CD8-positive, alpha-beta memory T cell (primary cell): ENCODE measurements at regions of chr11 and their contacts with region 1.

Region 1: DNA sequence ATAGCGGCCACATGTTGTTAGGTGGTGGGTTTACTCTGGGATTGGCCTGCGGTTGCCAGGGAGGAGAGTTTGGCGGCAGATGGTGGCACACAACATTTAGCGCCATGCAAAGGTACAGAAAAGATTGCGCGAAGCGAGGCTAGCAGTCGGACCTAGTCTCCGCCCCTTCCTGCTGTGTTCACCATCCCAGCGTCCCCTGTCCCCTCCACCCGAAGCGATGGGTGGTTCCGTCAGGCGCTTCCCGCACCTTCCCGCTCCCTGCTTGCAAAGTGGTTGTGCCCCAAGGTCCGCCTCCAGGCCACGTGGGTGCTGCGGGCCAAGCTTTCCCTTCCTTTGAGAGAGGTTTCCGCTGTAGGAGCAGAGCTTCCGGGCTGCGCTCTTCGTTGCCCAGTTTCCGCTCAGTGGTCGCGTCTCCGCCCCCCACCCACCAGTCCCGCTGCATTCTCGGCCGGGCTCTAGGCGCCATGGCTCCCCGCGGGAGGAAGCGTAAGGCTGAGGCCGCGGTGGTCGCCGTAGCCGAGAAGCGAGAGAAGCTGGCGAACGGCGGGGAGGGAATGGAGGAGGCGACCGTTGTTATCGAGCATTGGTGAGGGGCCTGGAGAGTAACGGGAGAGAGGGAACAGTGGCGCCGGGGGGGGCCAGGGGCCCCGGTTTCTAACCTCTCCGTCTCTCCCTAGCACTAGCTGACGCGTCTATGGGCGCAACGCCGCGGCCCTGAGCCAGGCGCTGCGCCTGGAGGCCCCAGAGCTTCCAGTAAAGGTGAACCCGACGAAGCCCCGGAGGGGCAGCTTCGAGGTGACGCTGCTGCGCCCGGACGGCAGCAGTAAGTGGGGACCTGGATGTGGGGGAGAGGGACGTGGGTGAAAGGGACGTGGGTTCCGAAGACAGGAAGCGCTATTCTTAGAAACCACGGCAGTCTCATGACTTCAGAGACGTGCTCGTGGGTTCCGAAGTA is at the start of gene SELENOH:
- DNase-seq: peak; percentile 85 to 91 (median 89)
- H3K4me3 ChIP-seq: peak within 1 kb of the TSS; percentile 93
- H3K4me3 Mint-ChIP-seq: peak within 1 kb of the TSS; percentile 92 to 100 (median 98)
- H3K27ac ChIP-seq: peak within 1 kb of the TSS; percentile 90
- H3K27ac Mint-ChIP-seq: peak within 1 kb of the TSS; percentile 94 to 100 (median 98)
- H3K4me1 ChIP-seq: peaks cover 26% of the 10 kb centered on the region
- H3K4me1 Mint-ChIP-seq: peaks cover 27 to 49% (median 40%) of the 10 kb centered on the region in 3 donors
- H3K27me3 ChIP-seq: no peaks in the 10 kb centered on the region
- H3K27me3 Mint-ChIP-seq: peaks cover 0 to 2% of the 10 kb centered on the region in 2 donors
- total RNA-seq, gene SELENOH: 272 to 276 TPM

Region 2: DNA sequence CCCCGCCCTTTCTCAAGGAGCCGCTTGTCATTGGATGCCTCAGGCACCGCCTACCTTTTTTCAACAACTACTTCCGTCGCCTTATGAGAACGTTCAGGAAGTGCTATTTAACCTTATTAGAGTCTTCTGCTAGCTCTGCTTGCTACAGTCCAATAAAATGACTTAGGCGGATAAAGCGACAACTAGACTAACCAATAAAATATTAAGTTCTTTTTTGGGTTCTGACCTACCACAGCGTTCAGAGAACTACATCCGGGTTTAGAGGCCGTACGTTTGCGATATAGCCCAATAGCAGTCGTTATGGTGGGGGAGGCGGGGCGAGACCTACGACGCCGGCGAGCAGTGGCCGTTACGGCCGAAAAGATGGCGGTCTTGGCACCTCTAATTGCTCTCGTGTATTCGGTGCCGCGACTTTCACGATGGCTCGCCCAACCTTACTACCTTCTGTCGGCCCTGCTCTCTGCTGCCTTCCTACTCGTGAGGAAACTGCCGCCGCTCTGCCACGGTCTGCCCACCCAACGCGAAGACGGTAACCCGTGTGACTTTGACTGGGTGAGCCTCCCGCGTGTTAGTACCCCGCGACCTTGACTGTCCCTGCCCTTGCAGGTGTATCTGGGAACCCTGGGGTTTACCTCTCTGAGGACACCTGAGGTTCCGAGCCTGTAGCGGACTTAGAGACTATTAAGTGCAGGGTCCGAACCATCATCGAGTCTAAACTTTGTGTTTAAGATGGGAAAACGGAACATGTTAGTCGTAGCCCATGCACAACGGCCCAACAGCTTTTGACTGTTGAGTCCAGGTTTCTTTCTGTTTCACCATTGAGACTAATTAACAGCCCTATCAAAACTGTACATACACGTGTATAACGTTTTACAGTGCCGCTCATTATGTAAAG is 28.9 kb before region 1 on chr11 and contains the start of gene TMX2:
- CTCF ChIA-PET with region 1: interaction called, 4 read pairs
- POLR2A ChIA-PET with region 1: interaction called, 10 read pairs
- DNase-seq: peak; percentile 87 to 93 (median 90)
- H3K4me3 ChIP-seq: peak within 1 kb of the TSS; percentile 99
- H3K4me3 Mint-ChIP-seq: peak within 1 kb of the TSS; percentile 93 to 99 (median 98)
- H3K27ac ChIP-seq: peak within 1 kb of the TSS; percentile 90
- H3K27ac Mint-ChIP-seq: peak within 1 kb of the TSS; percentile 81 to 98 (median 98)
- H3K4me1 ChIP-seq: peaks cover 43% of the 10 kb centered on the region
- H3K4me1 Mint-ChIP-seq: peaks cover 42 to 57% (median 53%) of the 10 kb centered on the region in 3 donors
- H3K27me3 ChIP-seq: no peaks in the 10 kb centered on the region
- H3K27me3 Mint-ChIP-seq: no peaks in the 10 kb centered on the region
- total RNA-seq, gene TMX2: 129 to 131 TPM

Region 3: DNA sequence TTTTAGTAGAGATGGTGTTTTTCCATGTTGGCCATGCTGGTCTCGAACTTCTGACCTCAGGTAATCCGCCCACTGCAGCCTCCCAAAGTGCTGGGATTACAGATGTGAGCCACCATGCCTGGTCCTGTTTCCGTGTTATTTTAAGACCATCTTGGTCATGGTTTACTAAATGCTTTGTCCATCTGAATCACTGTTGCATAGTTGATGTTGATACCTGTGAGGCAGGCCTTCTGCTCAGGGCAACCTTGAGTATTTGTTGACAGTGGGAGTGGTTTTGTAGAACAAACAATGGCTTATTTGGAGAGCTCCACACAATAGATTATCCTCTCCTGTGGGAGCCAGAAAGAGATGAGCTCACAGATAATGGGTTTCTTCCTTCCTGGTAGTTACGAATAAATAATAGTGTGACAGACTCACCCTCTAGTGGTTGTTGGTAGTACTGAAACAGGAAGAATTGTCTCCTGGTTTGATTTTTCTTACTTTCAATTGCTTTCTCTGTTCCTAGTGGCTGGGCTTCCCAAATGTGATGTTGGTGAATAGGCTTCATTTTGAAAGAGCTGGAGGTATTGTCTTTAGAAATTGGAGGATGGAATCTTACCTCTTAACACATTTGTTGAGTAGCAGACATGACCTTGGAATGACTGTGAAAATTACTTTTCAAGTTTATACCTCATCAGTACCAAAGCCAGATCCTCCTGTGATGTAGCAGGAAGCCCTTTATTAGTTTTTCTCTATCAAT is 59.2 kb after region 1 on chr11:
- CTCF ChIA-PET with region 1: interaction called, 16 read pairs
- POLR2A ChIA-PET with region 1: interaction called, 4 read pairs
- DNase-seq: peak in 2 of 5 donors; percentile 57 to 65
- H3K4me3 ChIP-seq: no peak overlapping the region
- H3K4me3 Mint-ChIP-seq: peak overlapping the region in 2 of 7 donors; percentile 15 to 41
- H3K27ac ChIP-seq: no peak overlapping the region
- H3K27ac Mint-ChIP-seq: peak overlapping the region; percentile 30 to 92 (median 86)
- H3K4me1 ChIP-seq: peaks cover 22% of the 10 kb centered on the region
- H3K4me1 Mint-ChIP-seq: peaks cover 11 to 21% (median 13%) of the 10 kb centered on the region in 3 donors
- H3K27me3 ChIP-seq: no peaks in the 10 kb centered on the region
- H3K27me3 Mint-ChIP-seq: peaks cover 0 to 2% of the 10 kb centered on the region in 2 donors